B cell (primary cell): ENCODE measurements at regions of chr3 and their contacts with region 1.

Region 1: DNA sequence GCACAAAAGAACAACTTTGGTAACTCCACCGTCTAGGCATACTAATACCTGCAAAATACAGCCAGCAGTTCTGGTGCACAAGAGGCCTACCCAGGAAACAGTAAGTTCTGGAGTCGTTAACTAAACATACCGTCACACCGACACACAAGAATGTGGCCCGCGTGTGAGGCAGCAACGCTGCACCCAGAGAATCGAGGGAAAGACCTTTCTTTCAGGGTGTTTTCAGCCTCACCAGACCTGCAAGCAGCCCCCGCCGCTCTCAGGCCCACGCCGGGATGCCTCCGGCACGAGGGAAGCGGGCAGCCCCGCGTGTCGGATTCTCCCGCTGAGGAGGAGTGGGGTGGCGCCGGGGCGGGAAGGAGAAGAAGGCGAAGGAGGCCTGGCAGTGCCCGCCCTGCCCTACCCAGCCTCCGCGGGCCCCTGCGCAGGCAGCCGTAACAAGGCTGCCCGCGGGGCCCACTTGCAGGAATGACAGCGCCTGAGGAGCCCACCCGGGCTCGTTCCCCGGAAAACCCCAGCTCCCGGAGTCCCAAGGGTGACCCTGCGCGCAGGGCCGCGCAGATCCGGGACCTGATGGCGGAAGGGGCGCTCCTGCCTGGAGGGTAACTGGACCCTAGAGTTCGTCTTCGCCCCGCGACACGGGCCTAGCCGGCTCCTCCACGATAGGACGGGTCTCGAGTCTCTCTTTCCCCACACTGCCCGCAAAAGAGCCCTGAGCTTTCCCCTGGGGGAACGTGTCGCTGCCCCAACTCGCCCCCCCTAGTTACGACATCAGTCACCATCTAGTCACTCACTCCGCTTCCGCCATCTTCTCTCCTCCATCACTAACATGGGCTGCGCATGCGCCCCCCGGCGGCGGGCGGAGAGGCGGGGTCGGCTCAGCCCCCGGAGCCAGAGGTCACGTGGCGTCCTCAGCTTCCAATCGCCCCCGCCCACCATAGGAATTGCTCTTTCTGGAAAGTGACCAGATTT is at the start of gene PHC3:
- DNase-seq: peak; percentile 95
- ATAC-seq: peak; percentile 82
- H3K4me3 ChIP-seq: peak within 1 kb of the TSS; percentile 61 to 98 (median 95)
- H3K4me3 Mint-ChIP-seq: peak within 1 kb of the TSS; percentile 98
- H3K27ac ChIP-seq: peak within 1 kb of the TSS; percentile 96 to 98
- H3K27ac Mint-ChIP-seq: peak within 1 kb of the TSS; percentile 100
- H3K4me1 ChIP-seq: peaks cover 20 to 25% of the 10 kb centered on the region in 2 donors
- H3K4me1 Mint-ChIP-seq: peaks cover 28% of the 10 kb centered on the region
- H3K27me3 ChIP-seq: no peaks in the 10 kb centered on the region
- H3K27me3 Mint-ChIP-seq: no peaks in the 10 kb centered on the region
- CTCF ChIP-seq: no peak
- total RNA-seq, gene PHC3: 159 and 165 TPM in 2 replicates

Region 2: GRCh38 chr3:169764452-169765274 is 416.5 kb before region 1 on chr3 and contains the start of gene TERC:
- CTCF ChIA-PET with region 1: interaction called, 3 read pairs
- POLR2A ChIA-PET with region 1: interaction called, 9 read pairs
- intact Hi-C with region 1: loop called (anchors 2 kb)
- DNase-seq: peak; percentile 95
- ATAC-seq: peak; percentile 82
- H3K4me3 ChIP-seq: peak within 1 kb of the TSS; percentile 70 to 100 (median 87)
- H3K4me3 Mint-ChIP-seq: peak within 1 kb of the TSS; percentile 100
- H3K27ac ChIP-seq: peak within 1 kb of the TSS; percentile 95 to 98
- H3K27ac Mint-ChIP-seq: peak within 1 kb of the TSS; percentile 100
- H3K4me1 ChIP-seq: peaks cover 11 to 17% of the 10 kb centered on the region in 2 donors
- H3K4me1 Mint-ChIP-seq: peaks cover 24% of the 10 kb centered on the region
- H3K27me3 ChIP-seq: no peaks in the 10 kb centered on the region
- H3K27me3 Mint-ChIP-seq: no peaks in the 10 kb centered on the region
- CTCF ChIP-seq: no peak
- total RNA-seq, gene TERC: 10.6 and 12.5 TPM in 2 replicates

Region 3: DNA sequence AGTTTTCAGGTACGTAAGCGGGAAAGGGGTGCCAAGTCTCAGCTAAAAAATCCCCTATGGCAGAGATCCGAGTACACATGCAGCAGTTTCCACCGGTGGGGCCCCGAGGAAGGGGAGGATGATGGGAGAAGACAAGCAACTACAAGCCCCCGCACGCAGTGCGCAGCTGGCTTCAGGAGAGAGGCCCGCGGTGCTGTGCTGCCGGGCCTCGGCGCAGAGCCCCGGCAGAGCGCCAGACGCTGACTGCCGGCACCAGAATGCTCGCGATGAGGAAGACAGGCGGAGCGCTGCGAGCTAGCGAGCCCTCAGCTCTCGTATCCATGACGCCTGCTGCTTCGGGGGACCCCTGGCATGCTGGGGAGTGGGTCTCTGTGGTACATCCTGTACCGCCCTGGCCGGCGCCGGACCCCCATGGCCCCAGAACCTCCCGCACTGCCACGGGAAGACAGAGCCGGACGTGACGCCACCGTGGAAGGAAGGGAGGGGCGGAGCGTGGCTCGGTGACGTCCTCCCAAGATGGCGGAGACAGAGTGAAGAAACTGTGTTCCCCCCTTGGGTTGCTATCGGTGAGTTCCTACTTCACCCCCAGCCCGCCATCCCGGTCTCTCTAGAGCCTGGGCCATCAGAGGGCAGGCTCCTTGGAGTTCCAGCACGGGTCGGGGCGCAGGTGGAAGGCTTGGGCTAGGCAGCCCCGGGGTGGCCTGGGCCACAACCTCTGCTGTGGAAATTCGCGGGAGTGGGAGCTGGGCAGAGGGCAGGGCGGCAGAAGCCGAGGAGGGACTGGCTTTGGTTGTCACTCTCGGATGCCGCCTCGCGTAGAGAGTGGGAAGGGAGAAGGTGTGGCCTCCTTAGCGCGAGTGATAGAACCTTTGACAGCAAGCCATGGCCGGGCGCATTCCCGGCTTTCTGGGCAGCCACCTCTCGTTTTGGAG is 408.0 kb before region 1 on chr3 and contains the start of gene MYNN:
- CTCF ChIA-PET with region 1: no interaction called
- POLR2A ChIA-PET with region 1: interaction called, 9 read pairs
- intact Hi-C with region 1: loop called (anchors 2 kb)
- DNase-seq: peak; percentile 96
- ATAC-seq: peak; percentile 78
- H3K4me3 ChIP-seq: peak within 1 kb of the TSS; percentile 89 to 97 (median 91)
- H3K4me3 Mint-ChIP-seq: peak within 1 kb of the TSS; percentile 100
- H3K27ac ChIP-seq: peak within 1 kb of the TSS; percentile 97
- H3K27ac Mint-ChIP-seq: peak within 1 kb of the TSS; percentile 99
- H3K4me1 ChIP-seq: peaks cover 16 to 19% of the 10 kb centered on the region in 2 donors
- H3K4me1 Mint-ChIP-seq: peaks cover 50% of the 10 kb centered on the region
- H3K27me3 ChIP-seq: no peaks in the 10 kb centered on the region
- H3K27me3 Mint-ChIP-seq: no peaks in the 10 kb centered on the region
- CTCF ChIP-seq: no peak
- total RNA-seq, gene MYNN: 24.0 and 25.5 TPM in 2 replicates

Region 4: GRCh38 chr3:170154569-170155143 is 26.5 kb before region 1 on chr3:
- CTCF ChIA-PET with region 1: interaction called, 3 read pairs
- POLR2A ChIA-PET with region 1: interaction called, 8 read pairs
- intact Hi-C with region 1: loop called (anchors 1 kb)
- DNase-seq: peak; percentile 75
- ATAC-seq: peak; percentile 89
- H3K4me3 ChIP-seq: peak overlapping the region; percentile 2 to 48 (median 35)
- H3K4me3 Mint-ChIP-seq: peak overlapping the region; percentile 82
- H3K27ac ChIP-seq: peak overlapping the region; percentile 85 to 91
- H3K27ac Mint-ChIP-seq: peak overlapping the region; percentile 98
- H3K4me1 ChIP-seq: peaks cover 65% of the 10 kb centered on the region in 2 donors
- H3K4me1 Mint-ChIP-seq: peaks cover 59% of the 10 kb centered on the region
- H3K27me3 ChIP-seq: no peaks in the 10 kb centered on the region
- H3K27me3 Mint-ChIP-seq: no peaks in the 10 kb centered on the region
- CTCF ChIP-seq: no peak

Region 5: GRCh38 chr3:170221924-170222646 is 40.9 kb after region 1 on chr3 and contains the start of gene PRKCI:
- CTCF ChIA-PET with region 1: no interaction called
- POLR2A ChIA-PET with region 1: no interaction called
- intact Hi-C with region 1: loop called (anchors 5 kb)
- DNase-seq: peak; percentile 78
- ATAC-seq: peak; percentile 94
- H3K4me3 ChIP-seq: peak within 1 kb of the TSS; percentile 59 to 80 (median 75)
- H3K4me3 Mint-ChIP-seq: peak within 1 kb of the TSS; percentile 95
- H3K27ac ChIP-seq: peak within 1 kb of the TSS in 1 of 2 donors; percentile 57
- H3K27ac Mint-ChIP-seq: peak within 1 kb of the TSS; percentile 86
- H3K4me1 ChIP-seq: peaks cover 7 to 14% of the 10 kb centered on the region in 2 donors
- H3K4me1 Mint-ChIP-seq: peaks cover 17% of the 10 kb centered on the region
- H3K27me3 ChIP-seq: no peaks in the 10 kb centered on the region
- H3K27me3 Mint-ChIP-seq: peaks cover 3% of the 10 kb centered on the region
- CTCF ChIP-seq: no peak
- total RNA-seq, gene PRKCI: 9.9 and 11.1 TPM in 2 replicates